Brain microvascular endothelial cell (primary cell): ENCODE measurements at regions of chr1 and their contacts with region 1.

Region 1: DNA sequence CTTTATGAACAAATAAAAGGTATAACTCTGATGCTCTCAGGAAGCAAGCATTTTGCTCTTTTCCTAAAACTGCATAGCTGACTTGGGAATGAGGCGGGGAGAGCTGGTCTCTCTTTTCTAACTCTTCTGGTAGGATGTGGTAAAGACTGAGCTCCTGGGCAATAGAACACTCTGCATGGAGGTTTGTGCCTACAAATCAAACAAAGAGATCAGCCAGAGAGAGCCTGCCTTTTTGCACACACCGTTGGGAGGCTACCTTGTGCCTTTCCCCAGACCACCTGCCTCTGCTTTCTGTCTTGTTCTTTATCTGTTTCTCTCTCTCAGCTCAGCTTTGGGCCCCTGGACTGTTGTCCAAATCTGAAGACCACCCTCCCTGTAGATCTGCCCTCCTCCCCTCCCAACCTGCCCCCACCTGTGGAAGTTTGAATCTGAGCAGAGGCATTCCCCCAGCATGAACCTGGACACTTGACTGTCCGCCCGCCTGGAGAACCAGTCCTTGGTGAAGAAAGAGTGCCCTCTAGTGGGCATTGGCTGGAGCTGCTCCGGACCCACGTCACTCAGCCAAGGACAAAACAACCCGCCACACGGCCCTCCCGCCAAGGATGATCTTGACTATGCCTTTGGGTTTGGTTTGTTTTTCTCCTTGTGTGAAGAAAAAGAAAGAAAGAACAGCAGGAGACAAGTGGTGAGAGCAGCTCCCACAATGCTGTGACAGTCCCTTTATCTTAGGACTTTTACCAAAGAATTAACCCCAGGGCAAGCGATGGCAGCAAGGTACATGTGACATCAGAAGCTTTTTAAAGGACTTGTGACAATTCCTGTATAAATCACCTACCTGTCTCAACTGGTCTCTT is 228.2 kb downstream of the PBX1 start:
- DNase-seq: peak; percentile 80
- H3K4me3 ChIP-seq: no peak overlapping the region
- H3K27ac ChIP-seq: peak overlapping the region; percentile 19
- H3K27me3 ChIP-seq: no peaks in the 10 kb centered on the region
- CTCF ChIP-seq: peak; percentile 93

Region 2: GRCh38 chr1:164637461-164638375 is 149.5 kb before region 1 on chr1:
- in situ Hi-C with region 1: loop called (anchors 25 kb)
- DNase-seq: peak; percentile 72
- H3K4me3 ChIP-seq: no peak overlapping the region
- H3K27ac ChIP-seq: peak overlapping the region; percentile 4
- H3K27me3 ChIP-seq: no peaks in the 10 kb centered on the region
- CTCF ChIP-seq: no peak

Region 3: DNA sequence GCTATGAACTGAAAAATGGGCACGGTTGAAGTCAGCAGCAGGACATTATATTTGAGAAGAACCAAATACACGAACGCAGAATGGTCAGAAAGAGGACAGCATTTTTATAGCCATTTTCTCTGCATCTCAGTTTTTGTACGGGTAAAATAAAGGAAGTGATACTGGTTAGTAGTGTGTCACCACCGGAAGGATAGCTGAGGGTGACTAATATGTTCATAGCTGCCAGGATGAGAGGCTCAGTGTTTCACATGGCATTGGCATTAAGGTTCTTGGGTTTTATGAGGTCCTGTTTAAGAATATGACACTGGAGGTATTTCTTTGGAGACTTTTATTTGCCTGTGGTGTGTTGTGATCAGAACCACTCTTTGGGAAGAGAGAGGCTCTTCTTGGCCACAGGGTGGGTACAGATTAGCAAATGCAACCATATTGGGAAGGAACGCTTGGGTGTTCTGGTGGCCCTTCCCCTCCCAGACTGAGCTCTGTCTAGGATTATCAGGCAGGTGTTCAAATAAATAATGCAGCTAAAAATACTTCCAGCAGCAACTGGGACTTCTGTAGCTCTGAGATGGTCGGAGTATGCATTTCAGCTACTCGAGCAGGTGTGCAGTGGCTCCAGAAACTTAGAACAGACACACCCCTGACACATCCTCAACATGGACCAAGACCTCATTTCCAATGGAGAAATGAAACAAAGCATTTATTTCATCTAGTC is 70.1 kb before region 1 on chr1:
- in situ Hi-C with region 1: no loop called
- DNase-seq: peak; percentile 58
- H3K4me3 ChIP-seq: no peak overlapping the region
- H3K27ac ChIP-seq: no peak overlapping the region
- H3K27me3 ChIP-seq: no peaks in the 10 kb centered on the region
- CTCF ChIP-seq: no peak

Region 4: DNA sequence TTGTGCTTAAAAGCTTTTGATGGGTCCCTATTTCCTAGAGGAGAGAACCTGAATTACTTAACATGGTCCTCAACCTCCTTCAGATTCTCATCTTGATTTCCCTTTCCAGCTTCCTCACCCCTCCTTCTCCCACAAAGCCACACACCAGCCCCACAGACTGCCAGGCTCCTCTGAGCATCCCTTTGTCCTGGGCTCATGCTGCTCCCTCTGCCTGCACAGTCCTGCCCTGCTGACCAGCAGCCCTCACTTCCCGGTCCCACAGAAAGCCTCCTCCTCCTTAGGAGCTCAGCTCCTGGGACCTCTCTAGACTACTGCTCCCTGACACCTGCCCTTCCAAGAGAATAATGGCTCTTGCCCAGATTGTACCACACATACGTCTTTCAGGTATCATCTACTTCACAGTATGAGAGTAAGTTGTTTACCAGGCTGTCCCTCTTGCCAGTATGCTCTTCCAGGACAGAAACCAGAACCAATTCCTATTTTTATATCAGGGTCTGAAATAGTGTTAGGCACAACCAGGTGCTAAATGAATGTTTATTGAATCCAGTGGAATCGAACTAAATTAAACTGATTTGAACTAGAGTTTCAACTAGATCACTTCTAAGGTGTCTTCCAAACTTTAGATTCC is 195.9 kb after region 1 on chr1:
- in situ Hi-C with region 1: no loop called
- DNase-seq: no peak
- H3K4me3 ChIP-seq: no peak overlapping the region
- H3K27ac ChIP-seq: no peak overlapping the region
- H3K27me3 ChIP-seq: no peaks in the 10 kb centered on the region
- CTCF ChIP-seq: no peak